CD4-positive, alpha-beta T cell (primary cell): ENCODE measurements at regions of chr20 and their contacts with region 1.

Region 1: DNA sequence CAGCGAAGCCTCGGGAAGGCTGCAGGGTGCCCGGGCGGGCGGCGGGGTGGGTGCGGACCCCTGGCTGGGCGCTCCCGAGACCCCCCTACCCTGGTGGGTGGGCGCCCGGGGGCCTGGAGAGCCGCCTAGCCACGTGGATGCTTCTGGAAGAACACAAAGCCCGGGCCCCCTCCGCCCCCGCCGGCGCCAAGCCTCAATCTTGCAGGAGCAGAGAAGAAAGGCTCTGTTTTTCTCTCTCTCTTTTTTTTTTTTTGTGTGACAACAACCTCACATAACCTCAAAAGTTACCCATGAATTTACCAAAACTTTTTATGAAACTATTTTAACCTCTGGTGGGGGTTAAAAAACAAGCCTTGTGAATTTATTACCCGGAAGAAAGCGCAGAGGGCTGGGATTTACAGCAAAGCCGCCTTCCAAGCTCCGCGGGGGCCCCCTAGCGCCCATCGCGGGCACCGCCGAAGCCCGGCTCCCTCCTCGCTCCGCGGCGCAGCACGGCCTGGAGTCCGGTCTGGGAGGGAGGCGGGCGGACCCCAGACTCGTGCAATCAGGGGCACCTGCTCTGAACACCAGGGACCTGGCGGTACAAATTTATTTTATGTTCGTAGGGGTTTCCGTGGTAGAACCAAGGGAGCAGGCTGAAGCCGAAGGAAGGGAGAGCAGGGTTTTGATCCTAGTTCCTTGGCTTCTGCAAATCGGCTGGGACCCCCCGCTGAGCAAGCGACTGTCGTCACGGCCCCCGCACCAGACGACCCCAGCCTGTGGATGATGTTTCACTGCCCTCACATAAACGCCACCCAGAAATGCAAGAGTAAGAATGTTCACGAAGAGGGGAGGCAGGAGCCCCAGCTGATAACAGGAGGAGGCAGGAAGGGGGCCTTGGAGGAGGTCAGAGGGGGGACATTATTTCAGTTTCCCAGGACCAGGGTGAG is 58.9 kb downstream of the ZNF831 start:
- DNase-seq: peak; percentile 72 to 87 (median 78)
- ATAC-seq: peak; percentile 94
- H3K4me3 ChIP-seq: peak overlapping the region; percentile 46
- H3K4me3 Mint-ChIP-seq: peak overlapping the region; percentile 86
- H3K27ac ChIP-seq: no peak overlapping the region
- H3K27ac Mint-ChIP-seq: peak overlapping the region; percentile 87
- H3K4me1 ChIP-seq: peaks cover 16% of the 10 kb centered on the region
- H3K4me1 Mint-ChIP-seq: peaks cover 51% of the 10 kb centered on the region
- H3K27me3 ChIP-seq: no peaks in the 10 kb centered on the region
- H3K27me3 Mint-ChIP-seq: no peaks in the 10 kb centered on the region
- CTCF ChIP-seq: peak; percentile 93

Region 2: DNA sequence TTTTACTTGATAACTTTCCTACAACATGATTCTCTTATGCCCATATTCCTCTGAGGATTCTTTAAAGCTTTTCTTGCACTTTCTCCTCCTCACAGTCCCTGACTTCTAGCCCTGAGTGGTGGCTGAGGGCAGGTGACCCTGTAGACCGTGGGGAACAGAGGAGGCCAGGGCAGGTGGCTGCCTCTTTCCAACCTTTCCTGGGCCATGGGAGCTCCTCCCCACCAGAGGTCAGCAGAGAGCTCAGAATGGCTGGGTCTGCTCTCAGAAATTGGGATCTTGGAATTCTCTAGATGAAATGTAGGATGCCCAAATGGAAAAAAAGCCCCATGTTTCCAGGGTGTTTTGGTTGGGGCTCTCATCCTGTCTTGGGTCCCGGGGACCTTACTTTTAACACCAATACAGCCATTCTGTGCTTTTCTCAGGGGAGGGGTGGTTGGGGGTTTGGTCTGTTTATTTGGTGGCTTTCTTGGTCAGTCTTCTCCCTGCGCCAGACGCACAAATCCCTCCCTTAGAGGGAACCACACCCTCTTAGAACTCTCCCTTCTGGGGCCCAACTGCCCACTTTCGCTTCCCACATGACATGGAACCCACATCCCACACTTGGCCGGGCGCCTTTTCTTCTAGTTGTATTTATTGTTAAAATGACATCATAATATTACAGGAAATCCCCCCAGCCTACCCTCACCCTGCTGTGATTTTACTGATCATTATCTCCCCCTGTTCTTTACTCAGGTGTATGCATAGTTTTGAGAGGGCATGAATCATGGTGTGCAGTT is 352.1 kb before region 1 on chr20:
- CTCF ChIA-PET with region 1: interaction called, 7 read pairs
- POLR2A ChIA-PET with region 1: no interaction called
- intact Hi-C with region 1: loop called (anchors 1 kb)
- DNase-seq: peak in 12 of 14 experiments; percentile 38 to 75 (median 50)
- ATAC-seq: peak; percentile 67
- H3K4me3 ChIP-seq: no peak overlapping the region
- H3K4me3 Mint-ChIP-seq: no peak overlapping the region
- H3K27ac ChIP-seq: no peak overlapping the region
- H3K27ac Mint-ChIP-seq: no peak overlapping the region
- H3K4me1 ChIP-seq: peaks cover 3% of the 10 kb centered on the region
- H3K4me1 Mint-ChIP-seq: peaks cover 5% of the 10 kb centered on the region
- H3K27me3 ChIP-seq: no peaks in the 10 kb centered on the region
- H3K27me3 Mint-ChIP-seq: no peaks in the 10 kb centered on the region
- CTCF ChIP-seq: peak; percentile 86

Region 3: GRCh38 chr20:59159493-59160376 is 62.8 kb before region 1 on chr20:
- CTCF ChIA-PET with region 1: interaction called, 10 read pairs
- POLR2A ChIA-PET with region 1: interaction called, 3 read pairs
- intact Hi-C with region 1: loop called in 1 of 2 experiments (anchors 5 kb)
- DNase-seq: peak; percentile 47 to 93 (median 66)
- ATAC-seq: peak; percentile 81
- H3K4me3 ChIP-seq: peak overlapping the region; percentile 70
- H3K4me3 Mint-ChIP-seq: peak overlapping the region; percentile 89
- H3K27ac ChIP-seq: peak overlapping the region; percentile 94 to 95
- H3K27ac Mint-ChIP-seq: peak overlapping the region; percentile 95
- H3K4me1 ChIP-seq: peaks cover 68% of the 10 kb centered on the region
- H3K4me1 Mint-ChIP-seq: peaks cover 98% of the 10 kb centered on the region
- H3K27me3 ChIP-seq: no peaks in the 10 kb centered on the region
- H3K27me3 Mint-ChIP-seq: no peaks in the 10 kb centered on the region
- CTCF ChIP-seq: no peak

Region 4: DNA sequence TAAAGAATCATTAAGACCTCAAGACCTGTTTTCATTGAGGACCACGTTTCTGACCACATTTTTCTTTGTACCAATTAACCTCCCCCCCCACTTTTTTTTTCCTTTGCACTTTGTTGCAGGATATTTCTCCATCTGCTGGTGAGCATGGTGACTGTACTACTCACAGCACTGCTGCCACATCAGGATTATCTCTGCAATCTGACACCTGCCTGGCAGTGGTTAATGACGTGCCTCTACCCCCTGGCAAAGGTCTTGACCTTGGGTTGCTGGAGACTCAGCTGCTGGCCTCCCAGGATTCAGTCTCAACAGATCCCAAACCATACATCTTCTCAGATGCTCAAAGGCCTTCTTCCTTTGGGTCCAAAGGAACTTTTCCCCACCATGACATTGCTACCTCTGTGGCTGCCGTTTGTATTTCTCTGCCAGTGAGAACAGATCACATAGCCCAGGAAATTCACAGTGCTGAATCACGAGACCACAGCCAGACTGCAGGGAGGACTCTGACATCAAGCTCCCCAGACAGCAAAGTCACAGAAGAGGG is 31.3 kb after region 1 on chr20:
- CTCF ChIA-PET with region 1: interaction called, 12 read pairs
- POLR2A ChIA-PET with region 1: interaction called, 9 read pairs
- intact Hi-C with region 1: loop called in 1 of 2 experiments (anchors 1 kb)
- DNase-seq: peak in 12 of 14 experiments; percentile 11 to 64 (median 30)
- ATAC-seq: peak; percentile 63
- H3K4me3 ChIP-seq: no peak overlapping the region
- H3K4me3 Mint-ChIP-seq: peak overlapping the region; percentile 78
- H3K27ac ChIP-seq: peak overlapping the region; percentile 46 to 51
- H3K27ac Mint-ChIP-seq: peak overlapping the region; percentile 94
- H3K4me1 ChIP-seq: peaks cover 28% of the 10 kb centered on the region
- H3K4me1 Mint-ChIP-seq: peaks cover 82% of the 10 kb centered on the region
- H3K27me3 ChIP-seq: no peaks in the 10 kb centered on the region
- H3K27me3 Mint-ChIP-seq: no peaks in the 10 kb centered on the region
- CTCF ChIP-seq: no peak

Region 5: DNA sequence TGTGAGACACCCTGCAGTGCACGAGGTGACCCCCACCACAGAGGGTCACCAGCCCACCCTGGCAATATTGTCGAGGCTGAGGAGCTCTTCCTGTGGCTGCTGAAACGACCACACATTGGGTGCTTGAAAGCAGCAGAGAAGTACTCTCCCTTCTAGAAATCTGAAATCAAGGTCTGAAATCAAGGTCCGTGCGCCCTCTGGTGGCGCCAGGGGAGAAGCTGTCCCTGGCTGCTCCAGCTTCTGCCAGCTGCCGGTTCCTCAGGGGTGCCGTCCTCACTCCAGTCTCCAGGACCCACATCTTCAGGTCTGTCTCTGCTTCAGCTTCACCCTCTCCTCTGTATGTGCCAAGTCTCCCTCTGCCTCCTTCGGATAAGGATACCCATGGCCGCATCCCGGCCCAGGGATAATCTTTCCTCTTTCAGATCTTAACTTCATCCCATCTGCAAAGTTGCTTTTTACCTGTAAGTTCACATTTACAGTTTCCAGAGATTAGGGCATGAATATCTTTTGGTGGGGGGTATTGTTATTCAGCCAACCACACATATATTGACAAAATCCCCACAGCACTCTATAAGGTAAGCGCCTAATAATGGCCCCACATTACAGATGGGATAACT is 273.5 kb after region 1 on chr20:
- CTCF ChIA-PET with region 1: no interaction called
- POLR2A ChIA-PET with region 1: no interaction called
- intact Hi-C with region 1: loop called in 1 of 2 experiments (anchors 5 kb)
- DNase-seq: peak; percentile 47 to 77 (median 60)
- ATAC-seq: peak; percentile 59
- H3K4me3 ChIP-seq: no peak overlapping the region
- H3K4me3 Mint-ChIP-seq: no peak overlapping the region
- H3K27ac ChIP-seq: no peak overlapping the region
- H3K27ac Mint-ChIP-seq: no peak overlapping the region
- H3K4me1 ChIP-seq: peaks cover 5% of the 10 kb centered on the region
- H3K4me1 Mint-ChIP-seq: no peaks in the 10 kb centered on the region
- H3K27me3 ChIP-seq: peaks cover 4 to 16% of the 10 kb centered on the region in 2 experiments
- H3K27me3 Mint-ChIP-seq: peaks cover 43% of the 10 kb centered on the region
- CTCF ChIP-seq: peak; percentile 89